ENCODE measurements at regions of chr21 and their contacts with region 1.

Region 1: DNA sequence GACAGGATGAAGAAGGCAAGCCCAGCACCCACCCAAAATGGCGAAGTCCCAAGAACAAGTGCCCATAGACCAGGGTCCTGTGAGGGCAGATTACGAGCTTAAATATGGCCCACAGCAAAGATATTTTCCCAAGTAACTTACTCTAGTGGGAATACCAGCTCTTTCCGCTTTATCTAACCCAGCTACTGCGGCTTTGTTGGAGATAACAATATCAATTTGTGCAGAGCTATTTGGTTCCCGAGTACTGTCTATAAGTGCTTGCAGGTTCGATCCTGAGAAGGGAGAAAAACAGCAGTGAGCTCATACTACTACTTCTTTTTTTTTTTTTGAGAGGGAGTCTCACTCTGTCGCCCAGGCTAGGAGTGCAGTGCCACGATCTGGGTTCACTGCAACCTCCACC is 14.3 kb upstream of the DNAJC28 start:
- DNase-seq: no peak
- ATAC-seq: no peak
- H3K4me3 ChIP-seq: no peak overlapping the region
- H3K4me3 Mint-ChIP-seq: no peak overlapping the region
- H3K27ac ChIP-seq: no peak overlapping the region
- H3K27ac Mint-ChIP-seq: no peak overlapping the region
- H3K4me1 ChIP-seq: no peaks in the 10 kb centered on the region
- H3K4me1 Mint-ChIP-seq: no peaks in the 10 kb centered on the region
- H3K27me3 ChIP-seq: no peaks in the 10 kb centered on the region
- H3K27me3 Mint-ChIP-seq: no peaks in the 10 kb centered on the region
- CTCF ChIP-seq: no peak

Region 2: DNA sequence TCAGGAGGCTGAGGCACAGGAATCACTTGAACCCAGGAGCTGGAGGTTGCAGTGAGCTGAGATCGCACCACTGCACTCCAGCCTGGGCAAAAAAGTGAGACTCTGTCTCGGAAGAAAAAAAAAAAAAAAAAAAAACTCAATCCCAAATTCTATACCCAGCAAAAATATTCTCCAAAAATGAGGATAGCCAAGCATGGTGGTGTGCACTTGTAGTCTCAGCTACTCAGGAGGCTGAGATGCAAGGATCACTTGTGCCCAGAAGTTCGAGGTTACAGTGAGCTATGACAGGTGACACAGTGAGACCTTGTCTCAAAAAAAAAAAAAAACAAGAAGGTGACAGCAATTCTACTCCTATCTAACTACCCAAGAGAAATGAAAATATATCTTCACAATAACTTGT is 32.5 kb before region 1 on chr21:
- CTCF ChIA-PET with region 1: no interaction called
- POLR2A ChIA-PET with region 1: interaction called, 12 read pairs
- intact Hi-C with region 1: no loop called
- DNase-seq: no peak
- ATAC-seq: no peak
- H3K4me3 ChIP-seq: no peak overlapping the region
- H3K4me3 Mint-ChIP-seq: no peak overlapping the region
- H3K27ac ChIP-seq: no peak overlapping the region
- H3K27ac Mint-ChIP-seq: no peak overlapping the region
- H3K4me1 ChIP-seq: peaks cover 3 to 4% of the 10 kb centered on the region in 2 donors
- H3K4me1 Mint-ChIP-seq: peaks cover 12% of the 10 kb centered on the region
- H3K27me3 ChIP-seq: no peaks in the 10 kb centered on the region
- H3K27me3 Mint-ChIP-seq: no peaks in the 10 kb centered on the region
- CTCF ChIP-seq: no peak

Region 3: DNA sequence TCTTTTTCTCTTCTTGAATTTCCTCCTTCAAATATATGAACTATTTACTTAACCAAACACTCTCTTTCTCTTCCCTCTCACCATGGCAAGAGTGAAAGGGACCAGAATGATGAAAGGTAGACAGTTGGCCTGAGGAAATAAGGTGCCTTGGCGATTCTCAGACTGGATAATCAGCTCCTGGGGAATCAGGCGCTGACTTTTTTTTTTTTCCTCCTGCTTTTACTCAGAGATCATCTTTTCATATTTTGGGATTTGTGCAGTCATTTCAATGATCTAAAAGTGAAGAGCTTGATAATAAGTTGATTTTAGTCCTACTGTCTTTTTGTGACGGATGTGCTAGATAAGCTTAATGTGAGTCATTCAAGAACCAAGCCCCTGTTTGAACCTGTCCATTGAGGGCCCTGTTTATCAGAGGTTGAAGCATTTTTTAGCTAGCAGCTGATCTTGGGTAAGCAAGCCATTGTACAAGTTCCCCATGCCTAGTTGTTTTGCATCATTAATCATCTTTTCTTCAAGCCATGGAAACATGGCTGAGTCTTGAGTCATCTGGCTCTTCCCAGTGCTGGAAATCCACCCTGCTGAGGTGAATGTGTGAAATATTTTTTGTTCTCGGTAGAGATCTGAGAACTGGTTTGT is 177.3 kb after region 1 on chr21:
- CTCF ChIA-PET with region 1: no interaction called
- POLR2A ChIA-PET with region 1: no interaction called
- intact Hi-C with region 1: no loop called
- DNase-seq: no peak
- ATAC-seq: no peak
- H3K4me3 ChIP-seq: no peak overlapping the region
- H3K4me3 Mint-ChIP-seq: no peak overlapping the region
- H3K27ac ChIP-seq: no peak overlapping the region
- H3K27ac Mint-ChIP-seq: no peak overlapping the region
- H3K4me1 ChIP-seq: no peaks in the 10 kb centered on the region
- H3K4me1 Mint-ChIP-seq: no peaks in the 10 kb centered on the region
- H3K27me3 ChIP-seq: peaks cover 0 to 3% (median 0%) of the 10 kb centered on the region in 4 experiments
- H3K27me3 Mint-ChIP-seq: peaks cover 24% of the 10 kb centered on the region
- CTCF ChIP-seq: no peak

Region 4: GRCh38 chr21:34113842-34114241 is 608.0 kb after region 1 on chr21:
- CTCF ChIA-PET with region 1: no interaction called
- POLR2A ChIA-PET with region 1: no interaction called
- intact Hi-C with region 1: no loop called
- DNase-seq: no peak
- ATAC-seq: no peak
- H3K4me3 ChIP-seq: no peak overlapping the region
- H3K4me3 Mint-ChIP-seq: no peak overlapping the region
- H3K27ac ChIP-seq: no peak overlapping the region
- H3K27ac Mint-ChIP-seq: no peak overlapping the region
- H3K4me1 ChIP-seq: no peaks in the 10 kb centered on the region
- H3K4me1 Mint-ChIP-seq: peaks cover 31% of the 10 kb centered on the region
- H3K27me3 ChIP-seq: no peaks in the 10 kb centered on the region
- H3K27me3 Mint-ChIP-seq: no peaks in the 10 kb centered on the region
- CTCF ChIP-seq: no peak

Measured in B cell (primary cell).